ENCODE measurements at regions of chr1 and their contacts with region 1.

Region 1: DNA sequence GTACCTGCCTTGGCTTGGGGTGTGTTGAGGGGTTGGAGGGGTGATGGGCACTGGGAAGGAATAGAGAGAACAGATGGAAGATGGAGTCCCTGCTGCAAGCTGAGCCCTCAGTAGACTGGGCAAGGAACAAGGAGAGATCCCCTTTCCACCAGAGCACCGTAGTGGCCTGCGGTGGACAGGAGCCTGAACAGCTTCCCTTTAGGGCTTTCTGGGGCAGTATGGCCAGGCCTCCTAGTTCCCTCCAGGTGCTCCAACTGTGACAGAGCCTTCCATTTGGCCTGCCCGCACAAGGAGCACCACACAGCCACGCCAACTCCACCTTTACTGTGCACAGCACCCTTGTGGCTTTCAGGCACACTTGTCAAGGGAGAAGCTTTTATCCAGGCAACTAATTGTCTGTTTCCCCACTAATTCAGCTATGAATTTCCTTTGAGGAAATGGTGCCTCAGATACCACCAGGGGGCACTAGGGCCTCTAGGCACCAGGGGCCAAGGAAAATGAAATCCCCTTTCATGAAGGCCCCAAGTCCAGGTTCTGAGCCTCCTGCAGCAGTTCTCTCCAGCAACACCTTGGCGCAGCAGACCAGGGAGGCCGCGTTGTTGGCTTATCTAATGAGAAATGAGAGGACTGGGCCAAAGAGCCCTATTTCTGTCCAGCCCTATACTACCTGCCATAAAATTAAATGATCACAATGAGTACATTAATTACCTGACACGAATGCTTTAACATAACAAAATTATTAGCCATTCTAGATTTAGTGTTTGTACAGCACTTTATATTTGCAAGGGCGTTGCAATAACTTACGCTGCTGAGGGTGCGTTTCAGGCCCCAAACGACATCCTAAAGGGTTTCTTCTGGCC is 23.1 kb upstream of the ERI3 start:
- DNase-seq: peak; percentile 72
- H3K4me3 Mint-ChIP-seq: no peak overlapping the region
- H3K27ac Mint-ChIP-seq: no peak overlapping the region
- H3K4me1 Mint-ChIP-seq: no peaks in the 10 kb centered on the region
- H3K27me3 Mint-ChIP-seq: no peaks in the 10 kb centered on the region
- CTCF ChIP-seq: peak; percentile 72

Region 2: GRCh38 chr1:44390277-44390676 is 12.1 kb after region 1 on chr1:
- CTCF ChIA-PET with region 1: interaction called, 15 read pairs
- POLR2A ChIA-PET with region 1: interaction called, 9 read pairs
- intact Hi-C with region 1: no loop called
- DNase-seq: peak; percentile 55
- H3K4me3 Mint-ChIP-seq: no peak overlapping the region
- H3K27ac Mint-ChIP-seq: no peak overlapping the region
- H3K4me1 Mint-ChIP-seq: no peaks in the 10 kb centered on the region
- H3K27me3 Mint-ChIP-seq: peaks cover 6% of the 10 kb centered on the region
- CTCF ChIP-seq: no peak

Region 3: GRCh38 chr1:44423591-44424537 is 45.7 kb after region 1 on chr1:
- CTCF ChIA-PET with region 1: interaction called, 6 read pairs
- POLR2A ChIA-PET with region 1: interaction called, 3 read pairs
- intact Hi-C with region 1: loop called (anchors 1 kb)
- DNase-seq: peak; percentile 98
- H3K4me3 Mint-ChIP-seq: peak overlapping the region; percentile 73
- H3K27ac Mint-ChIP-seq: peak overlapping the region; percentile 89
- H3K4me1 Mint-ChIP-seq: peaks cover 36% of the 10 kb centered on the region
- H3K27me3 Mint-ChIP-seq: no peaks in the 10 kb centered on the region
- CTCF ChIP-seq: no peak

Region 4: DNA sequence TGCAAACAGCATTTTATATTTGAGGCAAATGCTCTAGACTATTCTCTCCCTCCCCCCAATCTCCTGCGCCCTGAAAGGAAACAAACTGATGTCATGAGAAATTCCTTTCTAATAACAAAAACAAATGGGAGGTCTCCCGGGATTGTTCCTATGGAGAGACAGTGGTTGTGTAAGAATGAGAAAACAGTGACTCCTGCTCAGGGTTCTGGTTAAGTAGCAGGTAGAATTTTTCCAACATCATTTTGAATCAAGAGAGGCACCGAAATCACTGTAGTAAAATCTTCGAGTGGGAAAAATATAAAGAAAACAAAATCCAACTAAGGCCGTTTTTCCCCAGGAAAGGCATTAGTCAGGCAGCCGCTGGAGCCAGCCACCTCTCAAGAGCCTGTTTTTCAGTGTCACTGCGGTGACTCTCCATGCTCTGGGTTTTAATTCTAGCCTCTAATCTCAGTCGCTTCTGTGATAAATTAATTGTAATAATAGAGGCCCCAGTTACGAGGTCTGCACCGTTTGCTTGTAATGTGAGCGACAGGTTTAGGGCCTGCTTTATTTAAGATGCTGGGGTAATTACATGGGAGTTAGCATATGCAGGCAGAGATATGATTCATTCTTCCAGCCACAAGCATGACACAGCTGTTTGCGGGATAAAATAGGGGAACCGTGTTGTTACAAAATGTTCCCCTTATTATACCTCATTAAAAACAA is 107.2 kb after region 1 on chr1:
- CTCF ChIA-PET with region 1: no interaction called
- POLR2A ChIA-PET with region 1: no interaction called
- intact Hi-C with region 1: loop called (anchors 5 kb)
- DNase-seq: peak; percentile 83
- H3K4me3 Mint-ChIP-seq: peak overlapping the region; percentile 28
- H3K27ac Mint-ChIP-seq: peak overlapping the region; percentile 86
- H3K4me1 Mint-ChIP-seq: peaks cover 40% of the 10 kb centered on the region
- H3K27me3 Mint-ChIP-seq: no peaks in the 10 kb centered on the region
- CTCF ChIP-seq: no peak

Region 5: GRCh38 chr1:44500181-44501046 is 122.3 kb after region 1 on chr1:
- CTCF ChIA-PET with region 1: interaction called, 3 read pairs
- POLR2A ChIA-PET with region 1: no interaction called
- intact Hi-C with region 1: loop called (anchors 1 kb)
- DNase-seq: peak; percentile 11
- H3K4me3 Mint-ChIP-seq: no peak overlapping the region
- H3K27ac Mint-ChIP-seq: no peak overlapping the region
- H3K4me1 Mint-ChIP-seq: peaks cover 5% of the 10 kb centered on the region
- H3K27me3 Mint-ChIP-seq: no peaks in the 10 kb centered on the region
- CTCF ChIP-seq: peak; percentile 16

Region 6: GRCh38 chr1:44587796-44588460 is 209.8 kb after region 1 on chr1:
- CTCF ChIA-PET with region 1: interaction called, 113 read pairs
- POLR2A ChIA-PET with region 1: interaction called, 4 read pairs
- intact Hi-C with region 1: no loop called
- DNase-seq: no peak
- H3K4me3 Mint-ChIP-seq: no peak overlapping the region
- H3K27ac Mint-ChIP-seq: peak overlapping the region; percentile 12
- H3K4me1 Mint-ChIP-seq: peaks cover 13% of the 10 kb centered on the region
- H3K27me3 Mint-ChIP-seq: no peaks in the 10 kb centered on the region
- CTCF ChIP-seq: no peak